ENCODE measurements at regions of chr1 and their contacts with region 1.

Region 1: DNA sequence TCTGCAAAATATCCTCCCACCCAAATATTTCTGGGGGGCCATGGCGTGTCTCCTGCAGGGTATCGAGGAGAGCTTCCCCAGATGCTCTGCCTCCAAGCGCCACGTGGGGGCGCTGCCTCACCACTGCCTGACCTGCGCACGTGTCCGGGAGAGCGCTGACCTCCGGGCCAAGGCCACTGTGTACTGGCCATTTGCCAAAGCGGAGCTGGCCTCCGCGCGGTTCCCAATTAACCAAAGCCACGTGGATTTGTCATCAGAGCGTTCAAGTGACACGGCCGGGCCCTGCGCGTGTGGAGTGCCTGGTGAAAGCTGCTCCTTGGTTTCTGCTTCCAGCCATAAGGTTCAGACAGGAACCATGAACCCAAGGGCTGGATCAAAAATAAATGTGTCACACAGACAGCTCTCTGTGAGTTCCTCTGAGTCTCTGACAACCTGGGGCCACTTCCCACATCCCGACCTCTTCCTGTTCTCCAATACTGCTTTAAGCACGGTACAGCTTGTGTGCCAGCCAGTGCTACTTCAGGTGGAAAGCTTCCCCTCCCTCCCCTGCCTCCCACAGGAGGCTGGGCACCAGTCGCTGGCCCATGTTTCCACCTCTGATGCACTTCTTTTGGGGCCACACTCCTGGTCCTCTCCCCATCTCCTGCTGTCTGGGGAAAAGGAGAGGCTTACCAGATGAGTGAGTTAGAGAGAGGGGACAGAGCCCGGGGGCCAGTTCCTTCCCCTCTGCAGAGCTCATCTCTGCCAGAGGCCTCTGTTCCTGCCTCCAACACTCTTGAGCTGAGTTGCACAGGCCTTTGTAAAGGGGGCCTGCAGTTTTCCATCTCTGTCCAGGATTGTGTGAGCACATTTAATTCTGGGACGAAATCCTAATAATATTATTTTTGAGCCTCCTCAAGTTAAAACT is 26.1 kb downstream of the ZP4 start:
- DNase-seq: peak; percentile 41 to 92
- H3K4me3 ChIP-seq: no peak overlapping the region
- H3K27ac ChIP-seq: no peak overlapping the region
- H3K4me1 ChIP-seq: peaks cover 0 to 3% (median 2%) of the 10 kb centered on the region in 4 experiments; a peak in 2 of 7 replicates
- H3K27me3 ChIP-seq: peaks cover 4 to 10% (median 8%) of the 10 kb centered on the region in 4 experiments
- CTCF ChIP-seq: peak; percentile 94 to 95 (median 94)
- EP300 ChIP-seq: no peak
- POLR2A ChIP-seq: no peak
- RAD21 ChIP-seq: peak; percentile 97 to 98

Region 2: GRCh38 chr1:237634923-237635322 is 229.7 kb before region 1 on chr1:
- CTCF ChIA-PET with region 1: no interaction called
- POLR2A ChIA-PET with region 1: no interaction called
- DNase-seq: no peak
- H3K4me3 ChIP-seq: no peak overlapping the region
- H3K27ac ChIP-seq: no peak overlapping the region
- H3K4me1 ChIP-seq: no peaks in the 10 kb centered on the region
- H3K27me3 ChIP-seq: no peaks in the 10 kb centered on the region
- CTCF ChIP-seq: no peak
- EP300 ChIP-seq: no peak
- POLR2A ChIP-seq: no peak
- RAD21 ChIP-seq: no peak

Region 3: GRCh38 chr1:237789619-237790018 is 75.0 kb before region 1 on chr1:
- CTCF ChIA-PET with region 1: no interaction called
- POLR2A ChIA-PET with region 1: no interaction called
- DNase-seq: no peak
- H3K4me3 ChIP-seq: no peak overlapping the region
- H3K27ac ChIP-seq: no peak overlapping the region; the same call in 1 of the 2 replicates
- H3K4me1 ChIP-seq: no peaks in the 10 kb centered on the region
- H3K27me3 ChIP-seq: no peaks in the 10 kb centered on the region
- CTCF ChIP-seq: no peak
- EP300 ChIP-seq: no peak
- POLR2A ChIP-seq: no peak
- RAD21 ChIP-seq: no peak

Region 4: GRCh38 chr1:237799762-237800474 is 64.7 kb before region 1 on chr1:
- CTCF ChIA-PET with region 1: no interaction called
- POLR2A ChIA-PET with region 1: no interaction called
- DNase-seq: peak; percentile 57 to 82
- H3K4me3 ChIP-seq: no peak overlapping the region
- H3K27ac ChIP-seq: no peak overlapping the region
- H3K4me1 ChIP-seq: peaks cover 0 to 2% (median 0%) of the 10 kb centered on the region in 4 experiments; a peak in 1 of 7 replicates
- H3K27me3 ChIP-seq: no peaks in the 10 kb centered on the region
- CTCF ChIP-seq: peak; percentile 59 to 61 (median 59)
- EP300 ChIP-seq: no peak
- POLR2A ChIP-seq: no peak
- RAD21 ChIP-seq: peak; percentile 75 to 79

Region 5: GRCh38 chr1:237834461-237834860 is 30.1 kb before region 1 on chr1:
- CTCF ChIA-PET with region 1: interaction called, 11 read pairs
- POLR2A ChIA-PET with region 1: no interaction called
- DNase-seq: no peak
- H3K4me3 ChIP-seq: no peak overlapping the region
- H3K27ac ChIP-seq: no peak overlapping the region
- H3K4me1 ChIP-seq: peaks cover 0 to 13% (median 3%) of the 10 kb centered on the region in 4 experiments; a peak in 4 of 7 replicates
- H3K27me3 ChIP-seq: no peaks in the 10 kb centered on the region
- CTCF ChIP-seq: no peak
- EP300 ChIP-seq: no peak
- POLR2A ChIP-seq: no peak
- RAD21 ChIP-seq: no peak

Region 6: DNA sequence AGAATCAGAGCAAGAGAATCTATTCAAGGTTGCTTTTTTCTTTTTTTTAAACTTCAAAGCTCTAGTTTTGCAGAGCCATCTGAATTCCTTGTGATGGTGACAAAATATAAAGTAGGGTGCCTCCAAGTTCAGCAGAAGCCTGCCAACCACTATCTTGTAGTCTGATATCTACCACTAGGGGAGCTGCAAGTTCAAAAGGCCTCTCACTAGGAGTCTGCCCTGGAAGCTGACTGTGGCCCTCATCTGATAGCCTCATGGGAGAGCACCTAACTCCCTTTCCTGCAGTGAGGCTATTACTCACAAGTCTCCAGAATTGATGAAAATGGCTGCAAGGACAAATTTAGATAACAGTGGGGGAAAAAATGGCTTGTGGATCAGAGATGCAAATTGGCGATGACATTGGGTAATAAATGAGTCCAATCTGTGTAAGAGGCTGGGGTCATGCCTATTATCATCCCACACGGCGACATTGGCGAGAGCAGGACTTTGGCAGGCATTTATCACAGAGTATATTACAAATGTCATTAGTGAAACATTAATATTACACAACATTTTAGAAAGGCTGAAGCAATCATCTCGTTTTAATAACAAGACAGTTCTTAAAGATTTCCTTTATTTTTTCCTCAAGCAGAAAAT is 36.8 kb after region 1 on chr1:
- CTCF ChIA-PET with region 1: interaction called, 12 read pairs
- POLR2A ChIA-PET with region 1: no interaction called
- DNase-seq: no peak
- H3K4me3 ChIP-seq: no peak overlapping the region
- H3K27ac ChIP-seq: no peak overlapping the region
- H3K4me1 ChIP-seq: no peaks in the 10 kb centered on the region
- H3K27me3 ChIP-seq: no peaks in the 10 kb centered on the region
- CTCF ChIP-seq: peak; percentile 43 to 71 (median 64)
- EP300 ChIP-seq: no peak
- POLR2A ChIP-seq: no peak
- RAD21 ChIP-seq: peak; percentile 47 to 59

Region 7: GRCh38 chr1:237938553-237938952 is 74.0 kb after region 1 on chr1:
- CTCF ChIA-PET with region 1: interaction called, 90 read pairs
- POLR2A ChIA-PET with region 1: no interaction called
- DNase-seq: peak; percentile 23 to 80
- H3K4me3 ChIP-seq: no peak overlapping the region
- H3K27ac ChIP-seq: no peak overlapping the region
- H3K4me1 ChIP-seq: no peaks in the 10 kb centered on the region
- H3K27me3 ChIP-seq: no peaks in the 10 kb centered on the region
- CTCF ChIP-seq: peak in 2 of 3 experiments; percentile 52 to 65; a peak in 3 of 4 replicates
- EP300 ChIP-seq: no peak
- POLR2A ChIP-seq: no peak
- RAD21 ChIP-seq: peak; percentile 49 to 61

Region 8: DNA sequence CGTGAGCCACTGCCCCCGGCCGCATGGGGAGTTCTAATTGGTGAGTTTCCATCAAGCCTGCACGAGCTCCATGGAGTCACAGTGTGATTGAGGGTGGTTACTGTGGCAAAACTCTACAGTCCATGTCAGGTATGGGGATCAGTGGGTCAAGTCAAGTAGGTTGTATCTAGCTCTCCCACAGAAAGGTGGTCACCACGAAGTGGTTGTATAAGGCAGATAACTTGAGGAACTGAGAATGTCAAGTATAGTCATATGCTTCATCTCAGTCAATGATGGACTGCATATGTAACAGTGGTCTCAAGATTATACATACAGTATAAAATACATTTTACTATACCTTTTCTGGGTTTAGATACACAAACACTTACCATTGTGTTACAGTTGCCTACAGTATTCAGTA is 374.8 kb after region 1 on chr1:
- CTCF ChIA-PET with region 1: interaction called, 21 read pairs
- POLR2A ChIA-PET with region 1: no interaction called
- DNase-seq: no peak
- H3K4me3 ChIP-seq: no peak overlapping the region
- H3K27ac ChIP-seq: no peak overlapping the region
- H3K4me1 ChIP-seq: peaks cover 0 to 2% (median 0%) of the 10 kb centered on the region in 4 experiments; a peak in 1 of 7 replicates
- H3K27me3 ChIP-seq: no peaks in the 10 kb centered on the region
- CTCF ChIP-seq: no peak
- EP300 ChIP-seq: no peak
- POLR2A ChIP-seq: no peak
- RAD21 ChIP-seq: no peak